K562 (cell line): ENCODE measurements at regions of chr7 and their contacts with region 1.

Region 1: DNA sequence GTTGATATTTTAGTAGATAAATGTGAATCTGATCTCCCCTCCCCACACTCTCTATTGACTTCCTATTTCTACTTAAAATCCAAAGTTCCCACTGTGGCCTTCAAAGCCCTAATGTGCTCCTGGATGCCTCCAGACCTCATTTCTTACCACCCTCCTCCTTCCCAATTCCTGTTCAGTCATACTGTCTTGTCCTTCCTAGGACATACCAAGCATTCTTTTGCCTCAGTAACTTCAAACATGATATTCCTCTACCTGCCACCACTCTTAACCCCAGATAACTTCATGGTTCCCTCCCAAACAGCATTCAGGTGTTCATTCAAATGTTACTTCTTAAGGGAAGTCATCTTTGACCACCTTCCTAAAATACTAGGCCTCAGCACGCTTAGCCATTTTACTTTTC is 34.2 kb upstream of the FAM221A start:
- DNase-seq: no peak
- ATAC-seq: no peak
- H3K4me3 ChIP-seq: no peak overlapping the region
- H3K27ac ChIP-seq: no peak overlapping the region
- H3K4me1 ChIP-seq: no peaks in the 10 kb centered on the region
- H3K27me3 ChIP-seq: no peaks in the 10 kb centered on the region
- CTCF ChIP-seq: no peak
- EP300 ChIP-seq: no peak
- POLR2A ChIP-seq: no peak
- RAD21 ChIP-seq: no peak

Region 2: DNA sequence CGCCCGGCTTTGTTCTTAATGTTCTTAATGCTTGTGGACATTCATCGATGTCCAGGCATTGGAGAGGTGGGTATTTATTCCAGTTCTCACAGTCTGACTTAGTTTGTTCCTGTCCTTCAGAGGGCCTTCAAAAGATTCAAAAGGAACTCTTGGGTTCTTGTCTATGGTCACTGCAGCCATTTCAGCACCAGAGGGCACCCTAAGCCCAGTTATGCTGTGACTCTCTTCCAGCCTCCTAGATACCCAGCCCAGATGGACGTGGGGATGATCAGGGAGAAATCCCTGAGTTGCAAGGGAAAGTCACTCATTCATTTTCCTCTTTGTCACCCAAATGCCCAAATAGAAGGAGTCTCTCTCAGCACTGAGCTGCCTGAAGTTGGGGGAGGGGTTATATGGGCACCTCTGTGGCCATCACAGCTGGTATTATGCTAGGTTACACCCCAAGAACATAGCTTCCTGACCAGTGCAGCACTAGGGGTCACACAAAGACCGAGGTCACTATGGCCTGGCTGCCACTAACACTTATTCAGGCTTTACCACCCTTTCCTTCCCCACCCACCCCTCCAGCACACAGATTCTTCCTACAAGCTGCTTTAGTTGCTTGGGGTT is 75.1 kb before region 1 on chr7:
- CTCF ChIA-PET with region 1: no interaction called
- POLR2A ChIA-PET with region 1: no interaction called
- in situ Hi-C with region 1: no loop called
- intact Hi-C with region 1: loop called (anchors 5 kb)
- DNase-seq: peak; percentile 62 to 86 (median 69)
- ATAC-seq: peak; percentile 98
- H3K4me3 ChIP-seq: no peak overlapping the region
- H3K27ac ChIP-seq: no peak overlapping the region
- H3K4me1 ChIP-seq: peaks cover 0 to 5% of the 10 kb centered on the region in 2 experiments; a peak in 2 of 5 replicates
- H3K27me3 ChIP-seq: no peaks in the 10 kb centered on the region
- CTCF ChIP-seq: peak; percentile 82 to 91 (median 87)
- EP300 ChIP-seq: no peak
- POLR2A ChIP-seq: no peak
- RAD21 ChIP-seq: peak; percentile 96 to 98